GM12878 (cell line): ENCODE measurements at regions of chr6 and their contacts with region 1.

Region 1: DNA sequence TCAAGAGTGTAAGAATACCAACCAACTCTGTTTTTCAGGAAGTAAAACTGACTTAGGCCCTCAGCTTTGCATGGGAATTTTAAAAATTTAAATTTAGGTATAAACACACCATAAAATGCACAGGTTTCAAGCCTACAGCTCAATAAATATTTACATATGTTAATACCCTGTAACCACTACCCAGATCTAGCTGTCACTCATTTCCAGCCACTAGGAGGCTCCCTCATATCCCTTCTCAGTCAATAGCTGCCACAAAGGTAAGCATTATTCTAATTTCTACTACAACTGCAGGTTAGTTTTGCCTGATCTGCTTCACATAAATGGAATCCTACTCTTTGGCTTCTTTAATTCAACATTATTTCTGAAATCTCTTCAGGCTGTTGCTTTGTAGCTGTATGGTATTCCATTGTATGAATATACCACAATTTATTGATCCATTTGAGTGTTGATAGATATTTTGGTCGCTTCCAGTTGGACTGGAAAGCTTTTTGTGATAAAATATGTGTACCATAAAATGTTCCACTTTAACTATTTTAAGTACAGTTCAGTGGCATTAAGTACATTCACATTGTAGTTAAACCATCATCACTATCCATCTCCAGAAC is 32.5 kb upstream of the MEI4 start:
- DNase-seq: no peak
- ATAC-seq: peak; percentile 91
- H3K4me3 ChIP-seq: no peak overlapping the region
- H3K27ac ChIP-seq: no peak overlapping the region
- H3K4me1 ChIP-seq: no peaks in the 10 kb centered on the region
- H3K27me3 ChIP-seq: no peaks in the 10 kb centered on the region
- CTCF ChIP-seq: peak; percentile 46 to 63 (median 49)
- EP300 ChIP-seq: no peak
- POLR2A ChIP-seq: no peak
- RAD21 ChIP-seq: peak; percentile 44

Region 2: DNA sequence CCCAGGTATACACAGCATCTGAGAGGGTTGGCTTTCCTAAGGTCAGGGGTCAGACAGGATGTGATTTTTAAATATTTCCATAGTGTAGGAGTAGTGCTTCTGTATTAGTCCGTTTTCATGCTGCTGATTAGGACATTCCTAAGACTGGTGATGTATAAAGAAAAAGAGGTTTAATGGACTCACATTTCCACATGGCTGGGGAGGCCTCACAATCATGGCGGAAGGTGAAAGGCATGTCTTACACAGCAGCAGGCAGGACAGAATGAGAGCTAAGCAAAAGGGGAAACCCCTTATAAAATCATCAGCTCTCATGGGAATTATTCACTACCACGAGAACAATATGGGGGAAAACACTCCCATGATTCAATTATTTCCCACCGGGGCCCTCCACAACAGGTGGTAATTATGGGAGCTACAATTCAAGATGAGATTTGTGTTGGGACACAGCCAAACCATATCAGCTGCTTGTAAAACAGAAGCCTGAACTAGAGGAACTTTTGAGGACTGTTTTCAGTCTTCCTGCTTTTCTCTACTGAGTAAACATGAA is 58.5 kb before region 1 on chr6:
- CTCF ChIA-PET with region 1: interaction called, 3 read pairs
- POLR2A ChIA-PET with region 1: no interaction called
- RAD21 ChIA-PET with region 1: interaction called, 4 read pairs
- SMC1A ChIA-PET with region 1: interaction called, 27 read pairs
- in situ Hi-C with region 1: no loop called
- intact Hi-C with region 1: no loop called
- DNase-seq: no peak
- ATAC-seq: peak; percentile 50
- H3K4me3 ChIP-seq: no peak overlapping the region
- H3K27ac ChIP-seq: no peak overlapping the region
- H3K4me1 ChIP-seq: no peaks in the 10 kb centered on the region
- H3K27me3 ChIP-seq: no peaks in the 10 kb centered on the region
- CTCF ChIP-seq: no peak
- EP300 ChIP-seq: no peak
- POLR2A ChIP-seq: no peak
- RAD21 ChIP-seq: no peak

Region 3: GRCh38 chr6:77594285-77594684 is 26.1 kb before region 1 on chr6:
- CTCF ChIA-PET with region 1: interaction called, 23 read pairs
- POLR2A ChIA-PET with region 1: no interaction called
- RAD21 ChIA-PET with region 1: interaction called, 4 read pairs
- SMC1A ChIA-PET with region 1: interaction called, 11 read pairs
- in situ Hi-C with region 1: no loop called
- intact Hi-C with region 1: no loop called
- DNase-seq: no peak
- ATAC-seq: no peak
- H3K4me3 ChIP-seq: no peak overlapping the region
- H3K27ac ChIP-seq: no peak overlapping the region
- H3K4me1 ChIP-seq: no peaks in the 10 kb centered on the region
- H3K27me3 ChIP-seq: no peaks in the 10 kb centered on the region
- CTCF ChIP-seq: no peak
- EP300 ChIP-seq: no peak
- POLR2A ChIP-seq: no peak
- RAD21 ChIP-seq: no peak

Region 4: DNA sequence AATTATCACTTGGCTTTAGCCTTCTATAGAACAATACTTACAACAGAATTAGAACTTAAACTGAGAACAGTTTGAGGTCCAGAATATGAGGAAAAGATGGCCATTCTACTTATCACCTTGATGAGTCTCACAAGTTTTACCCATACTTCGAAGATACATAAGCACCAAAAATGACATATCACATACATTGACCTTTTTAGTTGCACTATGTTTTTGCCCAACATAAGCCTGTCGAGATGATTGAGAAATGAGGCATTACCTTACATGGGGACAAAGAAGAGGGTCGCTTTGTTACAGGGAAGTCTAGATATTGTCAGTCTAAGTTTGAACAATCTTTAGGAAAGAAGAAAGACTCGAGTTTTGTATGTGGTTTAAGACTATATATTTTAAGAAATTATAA is 15.9 kb before region 1 on chr6:
- CTCF ChIA-PET with region 1: interaction called, 23 read pairs
- POLR2A ChIA-PET with region 1: no interaction called
- RAD21 ChIA-PET with region 1: interaction called, 3 read pairs
- SMC1A ChIA-PET with region 1: interaction called, 9 read pairs
- in situ Hi-C with region 1: no loop called
- intact Hi-C with region 1: no loop called
- DNase-seq: no peak
- ATAC-seq: no peak
- H3K4me3 ChIP-seq: no peak overlapping the region
- H3K27ac ChIP-seq: no peak overlapping the region
- H3K4me1 ChIP-seq: no peaks in the 10 kb centered on the region
- H3K27me3 ChIP-seq: no peaks in the 10 kb centered on the region
- CTCF ChIP-seq: no peak
- EP300 ChIP-seq: no peak
- POLR2A ChIP-seq: no peak
- RAD21 ChIP-seq: no peak

Region 5: DNA sequence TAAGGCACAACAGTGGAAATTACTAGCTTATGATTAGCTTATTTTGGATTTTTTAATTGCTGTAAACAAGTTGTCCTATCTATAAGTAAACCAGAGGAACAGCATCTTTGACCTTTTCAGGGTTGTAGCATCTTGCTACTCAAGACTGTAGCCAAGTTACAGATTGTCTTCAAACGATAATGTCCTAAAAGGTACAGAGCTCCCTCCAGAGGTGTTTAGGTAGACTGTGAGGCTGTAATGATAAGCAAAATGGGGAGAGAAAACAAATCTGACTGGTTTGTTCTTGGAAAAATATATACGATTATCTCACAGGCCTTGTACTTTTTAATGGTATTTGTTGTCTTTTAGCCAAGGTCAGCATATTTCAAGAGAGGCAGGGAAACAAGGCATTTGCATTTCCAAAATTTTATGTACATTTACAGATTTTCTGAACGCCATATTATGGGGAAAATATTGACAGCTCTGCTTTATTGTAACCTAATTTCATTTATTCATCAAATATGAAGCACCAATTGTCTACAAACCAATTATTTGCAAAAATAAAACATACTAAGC is 305.9 kb after region 1 on chr6:
- CTCF ChIA-PET with region 1: interaction called, 21 read pairs
- POLR2A ChIA-PET with region 1: no interaction called
- RAD21 ChIA-PET with region 1: interaction called, 19 read pairs
- SMC1A ChIA-PET with region 1: interaction called, 3 read pairs
- in situ Hi-C with region 1: no loop called
- intact Hi-C with region 1: no loop called
- DNase-seq: no peak
- ATAC-seq: peak; percentile 80
- H3K4me3 ChIP-seq: no peak overlapping the region
- H3K27ac ChIP-seq: no peak overlapping the region
- H3K4me1 ChIP-seq: no peaks in the 10 kb centered on the region
- H3K27me3 ChIP-seq: no peaks in the 10 kb centered on the region
- CTCF ChIP-seq: peak in 2 of 3 experiments; percentile 20 to 45; a peak in 3 of 6 replicates
- EP300 ChIP-seq: no peak
- POLR2A ChIP-seq: no peak
- RAD21 ChIP-seq: peak; percentile 58

Region 6: DNA sequence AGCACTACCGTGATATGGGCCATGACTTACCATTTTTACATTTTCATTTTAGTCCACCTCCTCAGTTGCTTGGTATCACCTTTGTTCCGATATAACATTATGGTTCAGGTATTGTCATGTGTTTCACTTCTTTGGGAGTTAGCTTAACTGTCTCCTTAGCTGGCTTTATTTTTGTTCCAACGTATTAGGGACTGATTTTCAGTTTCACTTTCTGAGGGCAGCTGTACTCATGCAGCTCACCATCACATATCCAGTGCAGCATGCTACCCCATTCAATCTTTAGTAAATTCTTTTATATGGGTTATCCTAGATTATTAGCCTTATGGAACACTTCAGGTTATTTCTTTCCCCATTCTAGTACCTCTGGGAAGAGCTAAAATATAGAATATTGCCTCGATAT is 884.8 kb after region 1 on chr6:
- CTCF ChIA-PET with region 1: no interaction called
- POLR2A ChIA-PET with region 1: no interaction called
- RAD21 ChIA-PET with region 1: no interaction called
- SMC1A ChIA-PET with region 1: no interaction called
- in situ Hi-C with region 1: no loop called
- intact Hi-C with region 1: no loop called
- DNase-seq: no peak
- ATAC-seq: peak; percentile 51; the same call in 1 of the 3 replicates
- H3K4me3 ChIP-seq: no peak overlapping the region
- H3K27ac ChIP-seq: no peak overlapping the region
- H3K4me1 ChIP-seq: no peaks in the 10 kb centered on the region
- H3K27me3 ChIP-seq: no peaks in the 10 kb centered on the region
- CTCF ChIP-seq: no peak
- EP300 ChIP-seq: no peak
- POLR2A ChIP-seq: no peak
- RAD21 ChIP-seq: no peak